HepG2 (cell line): ENCODE measurements at regions of chr3 and their contacts with region 1.

Region 1: GRCh38 chr3:9932843-9933560 is 632 bp upstream of the CRELD1 start:
- DNase-seq: peak; percentile 70
- ATAC-seq: peak; percentile 88
- H3K4me3 ChIP-seq: peak overlapping the region; percentile 64 to 82 (median 80); a peak in 5 of 6 replicates
- H3K27ac ChIP-seq: peak overlapping the region; percentile 92
- H3K4me1 ChIP-seq: peaks cover 40% of the 10 kb centered on the region
- H3K27me3 ChIP-seq: no peaks in the 10 kb centered on the region
- CTCF ChIP-seq: peak; percentile 90
- EP300 ChIP-seq: no peak
- POLR2A ChIP-seq: 0 out of 4 replicates have a peak, but pooled peaks of 1 of the 2 experiments have one; percentile 59
- RAD21 ChIP-seq: peak; percentile 84

Region 2: DNA sequence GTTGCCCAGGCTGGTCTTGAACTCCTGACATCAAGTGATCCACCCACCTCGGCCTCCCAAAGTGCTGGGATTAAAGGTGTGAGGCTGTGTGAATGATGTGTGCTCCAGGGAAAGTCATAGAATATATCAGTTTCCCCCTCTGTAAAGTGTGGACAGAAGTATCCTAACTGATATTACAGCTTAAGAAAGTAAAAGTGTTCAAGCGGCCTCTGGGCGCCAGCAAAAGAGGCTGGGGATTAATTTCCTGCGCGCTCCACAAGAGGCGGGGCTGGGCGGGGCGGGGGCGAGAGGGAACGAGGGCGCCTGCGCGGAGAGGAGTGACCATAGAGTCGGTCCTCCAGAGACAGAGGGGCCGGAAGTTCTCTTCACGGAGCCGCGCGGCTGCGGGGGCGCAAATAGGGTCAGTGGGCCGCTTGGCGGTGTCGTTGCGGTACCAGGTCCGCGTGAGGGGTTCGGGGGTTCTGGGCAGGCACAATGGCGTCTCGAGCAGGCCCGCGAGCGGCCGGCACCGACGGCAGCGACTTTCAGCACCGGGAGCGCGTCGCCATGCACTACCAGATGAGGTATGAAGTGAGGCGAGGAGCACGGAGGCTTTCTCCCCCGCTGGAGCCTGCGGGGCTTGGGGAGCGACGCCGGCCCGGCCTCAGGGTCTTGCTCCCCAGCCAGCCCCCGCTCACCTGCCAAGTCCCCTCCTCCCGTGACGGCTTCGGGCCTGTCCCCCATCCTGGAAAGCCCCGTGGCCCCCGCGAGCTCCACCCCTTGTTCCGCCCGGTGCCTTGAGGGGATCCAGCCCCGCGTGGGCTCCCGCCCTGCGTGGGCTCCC is 42.5 kb before region 1 on chr3 and contains the start of gene JAGN1:
- CTCF ChIA-PET with region 1: no interaction called
- POLR2A ChIA-PET with region 1: interaction called, 14 read pairs
- in situ Hi-C with region 1: no loop called
- intact Hi-C with region 1: loop called (anchors 5 kb)
- DNase-seq: peak; percentile 77
- ATAC-seq: peak; percentile 85
- H3K4me3 ChIP-seq: peak within 1 kb of the TSS; percentile 85 to 99 (median 98)
- H3K27ac ChIP-seq: peak within 1 kb of the TSS; percentile 92
- H3K4me1 ChIP-seq: peaks cover 50% of the 10 kb centered on the region
- H3K27me3 ChIP-seq: no peaks in the 10 kb centered on the region; a peak in 1 of 5 replicates
- CTCF ChIP-seq: peak; percentile 57
- EP300 ChIP-seq: peak in 1 of 2 experiments; percentile 46; a peak in 2 of 4 replicates
- POLR2A ChIP-seq: peak; percentile 89 to 97
- RAD21 ChIP-seq: peak; percentile 71
- total RNA-seq, gene JAGN1: 40.9 and 50.9 TPM in 2 replicates

Region 3: DNA sequence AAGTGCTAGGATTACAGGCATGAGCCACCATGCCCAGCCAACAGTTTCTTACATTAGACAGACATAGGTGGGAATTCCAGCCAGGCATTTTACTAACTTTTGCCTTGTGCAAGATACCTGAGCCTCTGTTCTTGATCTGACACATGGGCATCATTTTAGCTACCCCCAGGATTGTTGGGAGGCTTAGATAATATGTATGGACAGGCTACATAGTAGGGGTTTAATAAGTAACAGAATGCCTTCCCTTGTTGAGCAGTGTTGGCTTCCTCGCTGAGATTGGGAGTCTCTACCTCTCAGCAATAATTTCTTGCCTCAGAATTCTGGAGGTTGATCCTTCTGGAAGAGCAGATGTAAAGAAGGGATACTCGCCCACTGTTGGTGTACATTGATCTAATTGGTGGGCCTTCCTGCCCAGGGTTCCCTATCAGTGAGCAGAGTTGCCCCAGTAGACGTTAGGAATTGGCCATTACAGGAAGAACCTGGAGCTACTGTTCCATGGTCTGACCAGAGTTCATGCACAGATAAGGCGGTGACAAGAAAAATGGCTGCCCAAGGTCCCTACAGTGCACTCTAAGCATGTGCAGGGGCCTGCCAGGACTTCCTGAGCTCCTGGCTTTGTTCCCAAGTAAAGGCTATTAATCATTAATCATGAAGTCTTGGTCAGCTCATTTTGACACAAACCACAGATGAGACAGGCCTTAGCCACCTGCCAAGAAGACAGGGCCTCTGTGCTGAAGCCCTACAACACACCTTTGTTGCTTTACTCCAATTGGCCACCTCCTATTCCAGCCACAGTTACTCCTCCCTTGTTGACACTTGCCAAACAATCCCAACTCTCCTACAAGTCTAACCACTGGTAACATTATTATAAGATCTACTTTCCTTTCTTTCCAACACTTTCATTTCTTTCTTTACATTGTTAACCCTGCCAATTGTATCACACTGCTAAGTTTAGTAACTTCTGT is 35.3 kb before region 1 on chr3:
- CTCF ChIA-PET with region 1: no interaction called
- POLR2A ChIA-PET with region 1: interaction called, 51 read pairs
- in situ Hi-C with region 1: no loop called
- intact Hi-C with region 1: loop called (anchors 5 kb)
- DNase-seq: peak; percentile 98
- ATAC-seq: peak; percentile 80
- H3K4me3 ChIP-seq: peak overlapping the region in 2 of 3 experiments; percentile 34 to 67; a peak in 3 of 6 replicates
- H3K27ac ChIP-seq: peak overlapping the region; percentile 100
- H3K4me1 ChIP-seq: peaks cover 79% of the 10 kb centered on the region
- H3K27me3 ChIP-seq: no peaks in the 10 kb centered on the region; a peak in 1 of 5 replicates
- CTCF ChIP-seq: no peak
- EP300 ChIP-seq: peak in 1 of 2 experiments; percentile 48; a peak in 3 of 4 replicates
- POLR2A ChIP-seq: peak; percentile 66 to 88
- RAD21 ChIP-seq: no peak

Region 4: GRCh38 chr3:9915254-9916141 is 17.5 kb before region 1 on chr3:
- CTCF ChIA-PET with region 1: no interaction called
- POLR2A ChIA-PET with region 1: interaction called, 120 read pairs
- in situ Hi-C with region 1: no loop called
- intact Hi-C with region 1: no loop called
- DNase-seq: peak; percentile 36
- ATAC-seq: peak; percentile 52
- H3K4me3 ChIP-seq: peak overlapping the region; percentile 55 to 86 (median 83); a peak in 5 of 6 replicates
- H3K27ac ChIP-seq: peak overlapping the region; percentile 90
- H3K4me1 ChIP-seq: peaks cover 38% of the 10 kb centered on the region
- H3K27me3 ChIP-seq: no peaks in the 10 kb centered on the region
- CTCF ChIP-seq: peak; percentile 53; the same call in 1 of the 2 replicates
- EP300 ChIP-seq: no peak
- POLR2A ChIP-seq: no peak; a peak in 1 of 4 replicates
- RAD21 ChIP-seq: peak; percentile 89

Region 5: GRCh38 chr3:10026084-10026890 is 93.3 kb after region 1 on chr3 and contains the start of gene FANCD2:
- CTCF ChIA-PET with region 1: no interaction called
- POLR2A ChIA-PET with region 1: interaction called, 6 read pairs
- in situ Hi-C with region 1: no loop called
- intact Hi-C with region 1: loop called (anchors 1 kb)
- DNase-seq: peak; percentile 72
- ATAC-seq: peak; percentile 97
- H3K4me3 ChIP-seq: peak within 1 kb of the TSS; percentile 80 to 92 (median 90)
- H3K27ac ChIP-seq: peak within 1 kb of the TSS; percentile 68
- H3K4me1 ChIP-seq: peaks cover 18% of the 10 kb centered on the region
- H3K27me3 ChIP-seq: no peaks in the 10 kb centered on the region
- CTCF ChIP-seq: no peak; the same call in 1 of the 2 replicates
- EP300 ChIP-seq: no peak
- POLR2A ChIP-seq: peak; percentile 75 to 86
- RAD21 ChIP-seq: peak; percentile 55; the same call in 1 of the 2 replicates
- total RNA-seq, gene FANCD2: 42.0 and 51.9 TPM in 2 replicates